Kidney (tissue), 22 donors: ENCODE measurements at regions of chr1 and their contacts with region 1.

Region 1: GRCh38 chr1:205255941-205256780 is 28.4 kb downstream of the TMCC2 start:
- DNase-seq: peak; percentile 91 to 94 (median 92)
- H3K4me3 ChIP-seq: no peak overlapping the region
- H3K27ac ChIP-seq: no peak overlapping the region
- H3K4me1 ChIP-seq: no peaks in the 10 kb centered on the region
- H3K27me3 ChIP-seq: no peaks in the 10 kb centered on the region
- CTCF ChIP-seq: peak; percentile 100

Region 2: DNA sequence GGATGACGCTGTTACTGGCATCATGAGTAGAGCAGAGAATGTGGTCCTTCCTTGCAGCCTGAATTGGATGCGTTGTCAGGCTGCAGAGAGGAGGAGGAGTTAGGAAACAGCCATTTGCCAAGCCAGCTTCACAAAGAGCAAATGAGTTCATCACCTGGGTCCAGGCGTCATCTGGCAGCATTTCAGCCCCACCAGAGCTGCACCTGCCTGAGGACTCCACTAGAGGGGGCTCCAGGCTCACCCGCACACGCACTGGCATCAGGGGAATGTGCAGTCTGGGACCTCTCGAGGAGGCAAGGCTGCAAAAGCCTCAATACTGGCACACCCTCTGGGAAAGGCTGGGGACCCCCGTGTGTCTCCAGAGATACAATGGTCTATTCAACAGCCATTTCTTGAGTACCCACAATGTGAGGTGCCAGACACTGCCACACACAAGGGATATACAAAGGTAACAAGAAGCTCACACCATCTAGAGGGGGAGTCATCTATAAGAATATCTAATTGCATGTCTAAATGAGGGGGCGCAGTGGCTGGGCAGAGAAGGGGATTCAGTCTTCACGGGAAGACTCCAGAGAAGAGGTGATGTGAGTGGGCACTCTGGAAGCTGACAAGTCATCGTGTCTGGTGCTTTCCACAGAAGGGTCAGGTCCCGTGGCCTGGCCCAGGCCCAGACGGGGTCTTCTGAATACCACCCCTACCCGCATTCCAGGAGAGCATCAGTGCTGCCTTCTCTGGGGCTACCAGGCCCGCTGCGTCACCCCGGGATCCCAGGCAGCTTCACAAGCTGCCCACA is 266.7 kb before region 1 on chr1:
- intact Hi-C with region 1: loop called (anchors 10 kb)
- DNase-seq: peak; percentile 68 to 89 (median 85)
- H3K4me3 ChIP-seq: no peak overlapping the region
- H3K27ac ChIP-seq: no peak overlapping the region
- H3K4me1 ChIP-seq: no peaks in the 10 kb centered on the region
- H3K27me3 ChIP-seq: no peaks in the 10 kb centered on the region
- CTCF ChIP-seq: peak; percentile 93

Region 3: DNA sequence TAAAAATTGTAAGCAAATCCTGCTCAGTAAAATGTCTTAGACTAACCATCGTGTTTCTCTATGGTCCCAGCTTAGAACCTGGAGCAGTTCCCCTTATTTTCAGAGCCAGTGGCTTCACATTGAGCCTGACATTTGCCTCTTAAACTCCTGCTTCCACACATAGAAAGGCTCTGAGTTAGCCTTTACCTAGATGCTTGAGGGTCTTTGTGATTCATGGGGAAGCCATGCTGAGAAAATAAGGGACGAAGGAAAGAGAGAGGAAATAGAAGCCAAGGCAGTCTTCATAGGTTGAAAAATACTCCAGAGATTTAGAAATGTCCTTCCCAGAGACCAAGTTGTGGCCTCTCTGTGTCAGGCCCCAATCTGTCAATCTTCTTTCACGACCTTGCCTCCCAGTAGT is 118.3 kb before region 1 on chr1:
- intact Hi-C with region 1: loop called (anchors 10 kb)
- DNase-seq: no peak
- H3K4me3 ChIP-seq: no peak overlapping the region
- H3K27ac ChIP-seq: no peak overlapping the region
- H3K4me1 ChIP-seq: peaks cover 0 to 7% (median 0%) of the 10 kb centered on the region in 3 donors
- H3K27me3 ChIP-seq: no peaks in the 10 kb centered on the region
- CTCF ChIP-seq: no peak

Region 4: GRCh38 chr1:205458777-205459566 is 202.8 kb after region 1 on chr1:
- intact Hi-C with region 1: no loop called
- DNase-seq: peak in 3 of 5 donors; percentile 83 to 92 (median 90)
- H3K4me3 ChIP-seq: no peak overlapping the region
- H3K27ac ChIP-seq: no peak overlapping the region
- H3K4me1 ChIP-seq: no peaks in the 10 kb centered on the region
- H3K27me3 ChIP-seq: peaks cover 11% of the 10 kb centered on the region
- CTCF ChIP-seq: no peak

Region 5: DNA sequence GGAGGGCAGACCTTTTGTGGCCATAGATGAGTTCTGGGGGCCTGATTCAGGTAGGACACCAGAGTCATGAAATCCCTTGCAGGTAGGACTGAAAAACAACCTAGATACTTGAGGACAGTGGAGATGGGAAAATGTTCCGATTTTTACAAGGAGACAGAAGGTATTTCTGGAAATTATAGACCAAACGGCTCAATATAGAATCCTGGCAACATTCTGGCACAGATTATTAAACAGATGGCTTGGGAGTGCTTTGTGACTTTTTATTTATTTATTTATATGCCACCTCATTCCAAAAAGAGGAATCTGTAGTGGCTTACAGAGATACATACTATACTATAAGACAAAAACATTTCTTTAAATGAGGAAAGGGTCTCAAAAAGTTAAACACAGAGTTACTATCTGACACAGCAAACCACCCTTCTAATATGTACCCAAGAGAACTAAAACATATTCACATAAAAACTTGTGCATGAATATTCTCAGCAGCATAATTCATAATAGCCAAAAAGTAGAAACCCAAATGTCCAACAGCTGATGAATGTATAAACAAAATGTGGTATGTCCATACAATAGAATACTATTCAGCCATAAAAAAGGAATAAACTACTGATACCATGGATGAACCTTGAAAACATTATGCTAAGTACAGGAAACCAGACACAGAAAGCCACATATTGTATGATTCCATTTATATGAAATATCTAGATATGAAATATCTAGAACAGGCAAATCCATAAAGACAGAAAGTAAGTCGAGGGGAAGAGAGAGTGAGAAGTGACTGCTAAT is 298.1 kb after region 1 on chr1:
- intact Hi-C with region 1: no loop called
- DNase-seq: no peak
- H3K4me3 ChIP-seq: no peak overlapping the region
- H3K27ac ChIP-seq: no peak overlapping the region
- H3K4me1 ChIP-seq: no peaks in the 10 kb centered on the region
- H3K27me3 ChIP-seq: no peaks in the 10 kb centered on the region
- CTCF ChIP-seq: no peak